ENCODE measurements at regions of chr3 and their contacts with region 1.

Region 1: GRCh38 chr3:125374996-125375941 is at the start of gene ZNF148:
- DNase-seq: peak; percentile 86 to 94 (median 92)
- ATAC-seq: peak; percentile 99
- H3K4me3 ChIP-seq: peak within 1 kb of the TSS; percentile 98
- H3K4me3 Mint-ChIP-seq: peak within 1 kb of the TSS; percentile 94 to 100 (median 96)
- H3K27ac ChIP-seq: peak within 1 kb of the TSS; percentile 88
- H3K27ac Mint-ChIP-seq: peak within 1 kb of the TSS; percentile 85 to 99 (median 97)
- H3K4me1 ChIP-seq: peaks cover 10 to 19% of the 10 kb centered on the region in 2 donors
- H3K4me1 Mint-ChIP-seq: peaks cover 27 to 59% (median 48%) of the 10 kb centered on the region in 7 donors
- H3K27me3 ChIP-seq: no peaks in the 10 kb centered on the region
- H3K27me3 Mint-ChIP-seq: peaks cover 0 to 3% (median 0%) of the 10 kb centered on the region in 5 donors
- total RNA-seq, gene ZNF148: 36.3 to 69.6 (median 53.2) TPM

Region 2: GRCh38 chr3:124995460-124995994 is 379.7 kb before region 1 on chr3:
- CTCF ChIA-PET with region 1: no interaction called
- POLR2A ChIA-PET with region 1: interaction called, 4 read pairs
- intact Hi-C with region 1: loop called in 1 of 2 experiments (anchors 1 kb)
- DNase-seq: peak; percentile 28 to 69 (median 47)
- ATAC-seq: peak; percentile 93
- H3K4me3 ChIP-seq: no peak overlapping the region
- H3K4me3 Mint-ChIP-seq: peak overlapping the region in 2 of 10 donors; percentile 7 to 41
- H3K27ac ChIP-seq: no peak overlapping the region
- H3K27ac Mint-ChIP-seq: peak overlapping the region in 7 of 9 donors; percentile 21 to 80 (median 53)
- H3K4me1 ChIP-seq: no peaks in the 10 kb centered on the region
- H3K4me1 Mint-ChIP-seq: peaks cover 0 to 32% (median 19%) of the 10 kb centered on the region in 7 donors
- H3K27me3 ChIP-seq: no peaks in the 10 kb centered on the region
- H3K27me3 Mint-ChIP-seq: no peaks in the 10 kb centered on the region

Region 3: DNA sequence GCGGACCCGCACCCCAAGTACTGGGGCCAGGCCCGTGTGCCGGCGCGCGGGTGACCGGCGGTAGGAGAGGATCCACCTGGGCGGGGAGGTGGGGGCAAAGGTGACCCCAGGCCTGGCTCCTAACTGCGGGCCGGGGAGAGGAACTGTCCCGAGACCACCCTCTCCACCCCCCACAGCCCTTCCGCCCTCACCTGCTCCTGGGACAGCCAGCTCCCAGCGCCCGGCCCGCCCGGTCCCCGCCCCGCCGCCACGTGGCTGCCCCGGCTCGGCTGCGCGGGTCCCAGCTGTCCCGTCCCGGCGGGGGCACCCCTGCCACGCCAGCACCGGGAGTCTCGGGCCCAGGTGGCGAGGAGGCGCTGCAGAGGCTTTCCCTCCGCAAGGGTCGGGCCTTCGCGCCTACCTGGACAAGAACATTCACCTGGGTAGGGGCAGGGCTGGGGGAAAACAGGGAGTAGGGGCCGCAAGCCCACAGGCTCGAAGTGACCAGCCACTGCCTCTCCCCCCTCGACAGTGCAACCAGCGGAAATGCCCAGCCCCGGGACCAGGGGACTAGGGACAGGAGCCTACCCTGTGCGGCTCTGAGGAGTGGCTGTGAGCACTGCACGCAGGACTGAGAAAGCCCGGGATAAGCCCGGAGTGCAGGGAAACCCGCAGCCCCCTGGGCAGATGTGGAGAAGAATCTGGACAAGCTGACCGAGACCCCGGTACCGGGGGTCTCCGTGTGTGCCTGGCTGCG is 162.6 kb before region 1 on chr3 and contains the start of gene SLC12A8:
- CTCF ChIA-PET with region 1: no interaction called
- POLR2A ChIA-PET with region 1: no interaction called
- intact Hi-C with region 1: loop called in 1 of 2 experiments (anchors 1 kb)
- DNase-seq: no peak
- ATAC-seq: peak; percentile 42
- H3K4me3 ChIP-seq: no peak within 1 kb of the TSS
- H3K4me3 Mint-ChIP-seq: peak within 1 kb of the TSS; percentile 32 to 78 (median 55)
- H3K27ac ChIP-seq: no peak within 1 kb of the TSS
- H3K27ac Mint-ChIP-seq: peak within 1 kb of the TSS in 1 of 9 donors; percentile 78
- H3K4me1 ChIP-seq: peaks cover 0 to 3% of the 10 kb centered on the region in 2 donors
- H3K4me1 Mint-ChIP-seq: peaks cover 11 to 25% (median 18%) of the 10 kb centered on the region in 7 donors
- H3K27me3 ChIP-seq: peaks cover 0 to 8% of the 10 kb centered on the region in 2 donors
- H3K27me3 Mint-ChIP-seq: peaks cover 45 to 61% (median 60%) of the 10 kb centered on the region in 5 donors
- total RNA-seq, gene SLC12A8: 0.16 to 1.1 (median 0.83) TPM

Region 4: DNA sequence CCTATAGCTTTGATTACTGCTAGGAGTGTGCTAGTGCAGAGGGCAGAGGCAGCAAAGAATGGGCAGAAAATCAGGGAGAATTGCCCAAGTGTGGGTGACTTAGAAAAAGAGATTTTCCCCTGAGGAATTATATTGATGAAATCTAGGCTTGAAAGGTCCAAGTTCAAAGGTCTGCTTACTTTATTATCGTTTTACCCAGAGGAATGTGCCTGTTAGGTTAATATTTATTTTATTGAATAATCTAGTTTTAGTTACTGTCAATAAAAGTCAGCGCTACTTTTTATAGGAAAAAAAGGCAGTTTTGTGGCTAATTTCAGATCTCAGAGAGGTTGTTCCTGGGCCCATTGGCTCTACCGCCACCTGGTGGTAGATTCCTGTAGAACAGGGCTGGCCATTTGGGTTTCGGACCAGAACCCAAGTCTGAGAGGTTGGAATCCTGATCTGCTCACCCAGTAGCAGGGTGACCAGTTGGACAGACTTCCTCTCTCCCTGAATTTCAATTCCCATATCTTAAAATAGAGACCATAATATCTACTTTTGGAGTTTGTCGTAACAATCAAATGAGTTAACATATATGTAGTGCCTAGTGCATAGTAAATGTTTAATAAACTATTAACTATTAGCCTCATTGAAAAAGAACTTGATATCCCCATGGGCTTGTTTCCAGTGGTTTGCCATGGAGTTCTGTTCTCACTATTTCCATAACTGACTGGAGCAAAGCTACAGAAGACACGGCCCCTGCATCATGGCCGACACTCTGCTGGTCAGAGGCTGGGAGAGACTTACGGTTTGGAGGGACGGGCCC is 62.6 kb after region 1 on chr3:
- CTCF ChIA-PET with region 1: no interaction called
- POLR2A ChIA-PET with region 1: interaction called, 3 read pairs
- intact Hi-C with region 1: loop called in 1 of 2 experiments (anchors 5 kb)
- DNase-seq: peak; percentile 26 to 68 (median 53)
- ATAC-seq: peak; percentile 78
- H3K4me3 ChIP-seq: no peak overlapping the region
- H3K4me3 Mint-ChIP-seq: no peak overlapping the region
- H3K27ac ChIP-seq: no peak overlapping the region
- H3K27ac Mint-ChIP-seq: no peak overlapping the region
- H3K4me1 ChIP-seq: no peaks in the 10 kb centered on the region
- H3K4me1 Mint-ChIP-seq: peaks cover 0 to 4% (median 0%) of the 10 kb centered on the region in 7 donors
- H3K27me3 ChIP-seq: no peaks in the 10 kb centered on the region
- H3K27me3 Mint-ChIP-seq: peaks cover 0 to 3% (median 0%) of the 10 kb centered on the region in 5 donors

Region 5: GRCh38 chr3:125967138-125967537 is 591.9 kb after region 1 on chr3:
- CTCF ChIA-PET with region 1: no interaction called
- POLR2A ChIA-PET with region 1: no interaction called
- intact Hi-C with region 1: loop called in 1 of 2 experiments (anchors 5 kb)
- DNase-seq: no peak
- ATAC-seq: no peak
- H3K4me3 ChIP-seq: no peak overlapping the region
- H3K4me3 Mint-ChIP-seq: no peak overlapping the region
- H3K27ac ChIP-seq: no peak overlapping the region
- H3K27ac Mint-ChIP-seq: no peak overlapping the region
- H3K4me1 ChIP-seq: peaks cover 2 to 5% of the 10 kb centered on the region in 2 donors
- H3K4me1 Mint-ChIP-seq: peaks cover 0 to 4% (median 4%) of the 10 kb centered on the region in 7 donors
- H3K27me3 ChIP-seq: peaks cover 3 to 6% of the 10 kb centered on the region in 2 donors
- H3K27me3 Mint-ChIP-seq: peaks cover 16 to 24% (median 22%) of the 10 kb centered on the region in 5 donors

Region 6: GRCh38 chr3:126703512-126704462 is 1328.5 kb after region 1 on chr3 and contains the start of gene CHCHD6:
- CTCF ChIA-PET with region 1: no interaction called
- POLR2A ChIA-PET with region 1: no interaction called
- intact Hi-C with region 1: loop called in 1 of 2 experiments (anchors 5 kb)
- DNase-seq: peak; percentile 92 to 99 (median 96)
- ATAC-seq: peak; percentile 99
- H3K4me3 ChIP-seq: peak within 1 kb of the TSS; percentile 82
- H3K4me3 Mint-ChIP-seq: peak within 1 kb of the TSS; percentile 83 to 99 (median 97)
- H3K27ac ChIP-seq: peak within 1 kb of the TSS; percentile 69
- H3K27ac Mint-ChIP-seq: peak within 1 kb of the TSS; percentile 71 to 98 (median 92)
- H3K4me1 ChIP-seq: peaks cover 6 to 13% of the 10 kb centered on the region in 2 donors
- H3K4me1 Mint-ChIP-seq: peaks cover 17 to 28% (median 21%) of the 10 kb centered on the region in 7 donors
- H3K27me3 ChIP-seq: peaks cover 0 to 5% of the 10 kb centered on the region in 2 donors
- H3K27me3 Mint-ChIP-seq: peaks cover 10 to 42% (median 19%) of the 10 kb centered on the region in 5 donors
- total RNA-seq, gene CHCHD6: 5.4 to 14.0 (median 10.0) TPM

Region 7: GRCh38 chr3:126995926-126996512 is 1620.8 kb after region 1 on chr3:
- CTCF ChIA-PET with region 1: no interaction called
- POLR2A ChIA-PET with region 1: no interaction called
- intact Hi-C with region 1: no loop called
- DNase-seq: no peak
- ATAC-seq: no peak
- H3K4me3 ChIP-seq: no peak overlapping the region
- H3K4me3 Mint-ChIP-seq: no peak overlapping the region
- H3K27ac ChIP-seq: no peak overlapping the region
- H3K27ac Mint-ChIP-seq: no peak overlapping the region
- H3K4me1 ChIP-seq: no peaks in the 10 kb centered on the region
- H3K4me1 Mint-ChIP-seq: peaks cover 0 to 7% (median 0%) of the 10 kb centered on the region in 7 donors
- H3K27me3 ChIP-seq: no peaks in the 10 kb centered on the region
- H3K27me3 Mint-ChIP-seq: no peaks in the 10 kb centered on the region

Measured in naive thymus-derived CD4-positive, alpha-beta T cell (primary cell).